CD14-positive monocyte (primary cell): ENCODE measurements at regions of chr4 and their contacts with region 1.

Region 1: DNA sequence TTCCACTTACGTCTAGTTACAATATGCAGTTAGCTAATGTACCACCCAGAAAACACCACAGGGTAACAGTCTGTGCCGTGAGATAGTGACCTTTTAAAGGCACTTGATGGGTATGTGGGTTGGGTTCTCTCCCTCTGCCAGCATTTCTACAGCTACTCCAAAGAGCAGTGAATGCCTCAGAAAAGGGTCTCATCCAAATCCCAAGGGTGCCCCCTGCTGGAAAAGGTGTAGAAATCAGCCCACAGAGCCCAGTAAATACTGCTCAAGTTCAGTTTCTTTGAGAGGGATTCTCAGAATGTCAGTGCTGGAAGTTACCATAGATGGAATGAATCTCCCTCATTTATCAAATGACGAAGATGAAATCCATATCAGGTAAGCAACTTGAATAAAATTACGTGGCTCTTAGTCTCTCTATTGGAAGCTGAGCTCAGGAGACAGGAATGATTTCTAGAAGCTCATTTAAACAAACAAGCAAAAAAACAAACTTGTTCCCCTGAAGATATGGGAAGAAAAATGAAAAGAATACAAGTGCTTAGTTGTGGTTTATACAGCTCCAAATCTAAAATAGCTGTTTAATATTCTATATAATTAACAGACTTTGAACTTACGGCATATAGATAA is 9.5 kb downstream of the RNF175 start:
- DNase-seq: peak; percentile 70 to 80 (median 72)
- H3K4me3 ChIP-seq: no peak overlapping the region
- H3K4me3 Mint-ChIP-seq: peak overlapping the region in 1 of 2 donors; percentile 37
- H3K27ac ChIP-seq: no peak overlapping the region
- H3K27ac Mint-ChIP-seq: peak overlapping the region in 1 of 7 donors; percentile 47
- H3K4me1 ChIP-seq: peaks cover 50% of the 10 kb centered on the region in 2 donors
- H3K4me1 Mint-ChIP-seq: peaks cover 50% of the 10 kb centered on the region
- H3K27me3 ChIP-seq: no peaks in the 10 kb centered on the region
- H3K27me3 Mint-ChIP-seq: peaks cover 0 to 4% (median 0%) of the 10 kb centered on the region in 3 donors
- CTCF ChIP-seq: peak; percentile 82

Region 2: DNA sequence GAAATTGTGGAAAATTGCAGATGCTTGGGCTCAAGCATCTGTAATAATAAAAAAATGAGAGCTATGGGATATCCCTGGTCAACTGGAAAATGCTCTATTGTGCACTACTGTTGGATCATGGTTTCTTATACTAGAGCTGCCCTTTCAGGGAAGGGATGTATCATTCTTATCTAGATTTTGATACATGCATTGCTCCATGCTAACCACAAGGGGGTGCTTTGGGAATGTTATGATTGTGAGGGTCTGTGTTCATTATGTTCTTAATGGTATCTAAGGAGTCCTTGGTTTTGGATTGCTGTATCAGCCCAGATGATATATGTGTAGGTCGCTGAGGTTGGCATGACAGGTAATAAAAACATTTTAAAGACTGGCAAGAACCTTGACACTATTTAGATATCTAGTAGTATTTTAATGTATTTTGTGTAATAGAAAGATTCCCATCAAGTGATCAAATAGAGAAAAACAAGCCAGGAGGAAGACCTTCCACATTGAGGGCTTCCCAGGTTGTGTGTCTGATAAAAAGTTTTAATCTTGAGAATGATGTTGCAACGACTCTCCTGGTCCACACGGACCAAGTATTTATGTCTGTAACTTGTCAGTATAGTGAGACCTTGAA is 115.5 kb before region 1 on chr4:
- intact Hi-C with region 1: loop called (anchors 2 to 5 kb)
- DNase-seq: peak in 2 of 3 donors; percentile 58
- H3K4me3 ChIP-seq: no peak overlapping the region
- H3K4me3 Mint-ChIP-seq: no peak overlapping the region
- H3K27ac ChIP-seq: peak overlapping the region in 1 of 2 donors; percentile 71
- H3K27ac Mint-ChIP-seq: peak overlapping the region in 6 of 7 donors; percentile 30 to 87 (median 85)
- H3K4me1 ChIP-seq: peaks cover 22 to 28% of the 10 kb centered on the region in 2 donors
- H3K4me1 Mint-ChIP-seq: peaks cover 25% of the 10 kb centered on the region
- H3K27me3 ChIP-seq: no peaks in the 10 kb centered on the region
- H3K27me3 Mint-ChIP-seq: peaks cover 0 to 1% (median 0%) of the 10 kb centered on the region in 3 donors
- CTCF ChIP-seq: peak; percentile 88

Region 3: GRCh38 chr4:153684182-153684970 is 65.9 kb before region 1 on chr4 and contains the start of gene TLR2:
- intact Hi-C with region 1: loop called in 1 of 2 experiments (anchors 10 kb)
- DNase-seq: peak; percentile 84 to 87 (median 85)
- H3K4me3 ChIP-seq: peak within 1 kb of the TSS; percentile 93 to 98 (median 94)
- H3K4me3 Mint-ChIP-seq: peak within 1 kb of the TSS; percentile 94 to 99
- H3K27ac ChIP-seq: peak within 1 kb of the TSS; percentile 77 to 96
- H3K27ac Mint-ChIP-seq: peak within 1 kb of the TSS; percentile 90 to 97 (median 95)
- H3K4me1 ChIP-seq: peaks cover 29 to 68% of the 10 kb centered on the region in 2 donors
- H3K4me1 Mint-ChIP-seq: peaks cover 43% of the 10 kb centered on the region
- H3K27me3 ChIP-seq: no peaks in the 10 kb centered on the region
- H3K27me3 Mint-ChIP-seq: peaks cover 0 to 4% (median 0%) of the 10 kb centered on the region in 3 donors
- CTCF ChIP-seq: peak; percentile 9
- polyA plus RNA-seq, gene TLR2: 133 to 187 (median 162) TPM

Region 4: GRCh38 chr4:153722036-153722435 is 28.3 kb before region 1 on chr4:
- intact Hi-C with region 1: no loop called
- DNase-seq: no peak
- H3K4me3 ChIP-seq: no peak overlapping the region
- H3K4me3 Mint-ChIP-seq: no peak overlapping the region
- H3K27ac ChIP-seq: no peak overlapping the region
- H3K27ac Mint-ChIP-seq: no peak overlapping the region
- H3K4me1 ChIP-seq: peaks cover 20% of the 10 kb centered on the region in 2 donors
- H3K4me1 Mint-ChIP-seq: peaks cover 35% of the 10 kb centered on the region
- H3K27me3 ChIP-seq: no peaks in the 10 kb centered on the region
- H3K27me3 Mint-ChIP-seq: peaks cover 0 to 2% (median 0%) of the 10 kb centered on the region in 3 donors
- CTCF ChIP-seq: no peak